ENCODE measurements at regions of chr6 and their contacts with region 1.

Region 1: GRCh38 chr6:1604158-1605030 is 5.3 kb upstream of the FOXC1 start:
- DNase-seq: peak; percentile 34 to 81 (median 61)
- ATAC-seq: peak; percentile 72
- H3K4me3 ChIP-seq: peak overlapping the region in 1 of 2 experiments; percentile 33
- H3K4me3 Mint-ChIP-seq: peak overlapping the region; percentile 11
- H3K27ac ChIP-seq: no peak overlapping the region
- H3K27ac Mint-ChIP-seq: no peak overlapping the region
- H3K4me1 ChIP-seq: peaks cover 45% of the 10 kb centered on the region
- H3K4me1 Mint-ChIP-seq: peaks cover 37% of the 10 kb centered on the region
- H3K27me3 ChIP-seq: peaks cover 40 to 53% of the 10 kb centered on the region in 2 experiments
- H3K27me3 Mint-ChIP-seq: peaks cover 76% of the 10 kb centered on the region
- CTCF ChIP-seq: peak; percentile 93

Region 2: DNA sequence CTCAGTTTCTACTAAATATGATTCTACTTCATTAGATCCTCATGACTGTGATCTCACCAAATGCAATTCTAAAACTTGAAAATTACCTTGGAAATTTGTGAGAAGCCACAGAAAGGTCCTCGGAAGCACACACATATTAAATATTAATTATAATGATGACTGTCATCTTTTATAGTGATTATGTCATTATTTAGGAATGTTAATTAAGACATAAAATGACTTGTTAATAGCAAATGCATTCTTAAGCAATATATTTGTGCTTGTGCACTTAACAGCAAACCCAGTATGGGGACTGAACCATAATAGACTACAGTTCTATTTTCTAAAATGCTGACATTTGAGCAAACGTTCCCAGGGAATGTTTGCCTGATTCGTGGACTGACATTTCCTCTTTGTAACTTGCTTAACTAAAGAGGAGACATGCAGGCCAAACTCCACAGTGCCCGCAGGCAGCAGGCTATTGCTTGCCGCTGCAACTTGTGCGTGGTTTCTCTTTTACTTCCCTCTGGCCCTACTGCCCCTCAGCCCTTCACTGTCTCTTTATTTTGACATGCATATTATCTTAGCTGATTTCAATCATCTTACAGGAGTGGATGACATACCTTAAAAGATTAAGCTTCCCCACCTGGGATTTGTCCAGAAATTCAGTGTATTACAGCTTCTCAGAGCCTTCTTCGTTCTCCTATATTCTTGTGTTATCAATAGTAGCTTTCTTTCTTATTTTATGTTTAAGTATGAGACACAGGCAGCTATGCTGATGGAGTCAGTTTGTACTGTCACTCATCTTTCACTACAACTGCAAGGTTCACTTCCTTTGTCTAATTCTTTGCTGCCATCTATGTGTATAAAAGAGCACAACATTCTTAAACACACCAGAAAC is 499.5 kb after region 1 on chr6:
- CTCF ChIA-PET with region 1: interaction called, 11 read pairs
- POLR2A ChIA-PET with region 1: no interaction called
- intact Hi-C with region 1: loop called (anchors 1 kb)
- DNase-seq: peak in 2 of 9 experiments; percentile 37 to 53
- ATAC-seq: peak; percentile 48
- H3K4me3 ChIP-seq: no peak overlapping the region
- H3K4me3 Mint-ChIP-seq: no peak overlapping the region
- H3K27ac ChIP-seq: no peak overlapping the region
- H3K27ac Mint-ChIP-seq: no peak overlapping the region
- H3K4me1 ChIP-seq: no peaks in the 10 kb centered on the region
- H3K4me1 Mint-ChIP-seq: no peaks in the 10 kb centered on the region
- H3K27me3 ChIP-seq: peaks cover 0 to 2% of the 10 kb centered on the region in 2 experiments
- H3K27me3 Mint-ChIP-seq: no peaks in the 10 kb centered on the region
- CTCF ChIP-seq: peak; percentile 44

Region 3: DNA sequence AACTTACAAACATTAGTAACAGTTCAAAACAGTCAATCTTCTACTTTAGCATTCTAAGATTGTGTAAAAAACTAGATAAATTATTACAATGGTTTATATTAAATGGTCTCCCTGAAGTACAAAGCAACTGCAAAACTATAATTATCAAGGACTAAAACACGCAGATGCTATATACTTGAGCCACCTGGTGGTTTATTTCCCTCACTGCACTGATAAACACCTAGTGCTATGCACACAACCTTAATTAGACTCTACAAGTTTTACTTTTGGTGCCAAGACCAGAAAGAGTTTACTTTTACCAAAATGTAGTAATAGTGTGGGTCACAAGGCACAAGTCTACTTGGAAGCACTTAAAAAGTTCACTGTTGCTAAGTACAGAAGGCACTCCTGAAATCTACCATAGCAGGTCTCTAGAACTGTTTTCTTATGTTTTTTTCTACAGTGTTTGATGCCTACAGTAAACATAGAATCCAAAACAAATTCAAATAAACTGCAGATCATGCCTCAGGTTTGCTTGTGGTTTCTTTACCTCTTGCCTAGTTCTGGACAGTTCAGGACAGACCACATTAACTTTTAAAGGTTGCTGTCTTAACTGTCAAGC is 591.8 kb after region 1 on chr6:
- CTCF ChIA-PET with region 1: interaction called, 7 read pairs
- POLR2A ChIA-PET with region 1: no interaction called
- intact Hi-C with region 1: loop called (anchors 1 kb)
- DNase-seq: peak in 4 of 9 experiments; percentile 26 to 68 (median 51)
- ATAC-seq: peak; percentile 72
- H3K4me3 ChIP-seq: no peak overlapping the region
- H3K4me3 Mint-ChIP-seq: no peak overlapping the region
- H3K27ac ChIP-seq: no peak overlapping the region
- H3K27ac Mint-ChIP-seq: no peak overlapping the region
- H3K4me1 ChIP-seq: no peaks in the 10 kb centered on the region
- H3K4me1 Mint-ChIP-seq: peaks cover 3% of the 10 kb centered on the region
- H3K27me3 ChIP-seq: no peaks in the 10 kb centered on the region
- H3K27me3 Mint-ChIP-seq: no peaks in the 10 kb centered on the region
- CTCF ChIP-seq: peak; percentile 86

Region 4: GRCh38 chr6:2353412-2354137 is 749.2 kb after region 1 on chr6:
- CTCF ChIA-PET with region 1: interaction called, 51 read pairs
- POLR2A ChIA-PET with region 1: no interaction called
- intact Hi-C with region 1: loop called (anchors 1 kb)
- DNase-seq: peak; percentile 10 to 62 (median 48)
- ATAC-seq: no peak
- H3K4me3 ChIP-seq: no peak overlapping the region
- H3K4me3 Mint-ChIP-seq: no peak overlapping the region
- H3K27ac ChIP-seq: no peak overlapping the region
- H3K27ac Mint-ChIP-seq: no peak overlapping the region
- H3K4me1 ChIP-seq: no peaks in the 10 kb centered on the region
- H3K4me1 Mint-ChIP-seq: no peaks in the 10 kb centered on the region
- H3K27me3 ChIP-seq: no peaks in the 10 kb centered on the region
- H3K27me3 Mint-ChIP-seq: no peaks in the 10 kb centered on the region
- CTCF ChIP-seq: peak; percentile 75

Region 5: GRCh38 chr6:2448820-2449571 is 844.6 kb after region 1 on chr6:
- CTCF ChIA-PET with region 1: no interaction called
- POLR2A ChIA-PET with region 1: no interaction called
- intact Hi-C with region 1: loop called in 1 of 2 experiments (anchors 2 kb)
- DNase-seq: peak in 2 of 9 experiments; percentile 37 to 47
- ATAC-seq: no peak
- H3K4me3 ChIP-seq: no peak overlapping the region
- H3K4me3 Mint-ChIP-seq: peak overlapping the region; percentile 60
- H3K27ac ChIP-seq: no peak overlapping the region
- H3K27ac Mint-ChIP-seq: no peak overlapping the region
- H3K4me1 ChIP-seq: no peaks in the 10 kb centered on the region
- H3K4me1 Mint-ChIP-seq: peaks cover 5% of the 10 kb centered on the region
- H3K27me3 ChIP-seq: no peaks in the 10 kb centered on the region
- H3K27me3 Mint-ChIP-seq: no peaks in the 10 kb centered on the region
- CTCF ChIP-seq: no peak

Region 6: GRCh38 chr6:2749969-2750600 is 1145.7 kb after region 1 on chr6:
- CTCF ChIA-PET with region 1: no interaction called
- POLR2A ChIA-PET with region 1: no interaction called
- intact Hi-C with region 1: loop called in 1 of 2 experiments (anchors 2 kb)
- DNase-seq: peak; percentile 46 to 78 (median 71)
- ATAC-seq: peak; percentile 86
- H3K4me3 ChIP-seq: no peak overlapping the region
- H3K4me3 Mint-ChIP-seq: no peak overlapping the region
- H3K27ac ChIP-seq: no peak overlapping the region
- H3K27ac Mint-ChIP-seq: no peak overlapping the region
- H3K4me1 ChIP-seq: peaks cover 8% of the 10 kb centered on the region
- H3K4me1 Mint-ChIP-seq: peaks cover 6% of the 10 kb centered on the region
- H3K27me3 ChIP-seq: peaks cover 0 to 2% of the 10 kb centered on the region in 2 experiments
- H3K27me3 Mint-ChIP-seq: peaks cover 5% of the 10 kb centered on the region
- CTCF ChIP-seq: peak; percentile 99

Measured in CD8-positive, alpha-beta T cell (primary cell).